MCF 10A (cell line): ENCODE measurements at regions of chr15 and their contacts with region 1.

Region 1: GRCh38 chr15:40847205-40847961 is 3.5 kb downstream of the SPINT1 start:
- DNase-seq: peak; percentile 69
- H3K4me3 Mint-ChIP-seq: peak overlapping the region; percentile 96
- H3K27ac Mint-ChIP-seq: peak overlapping the region; percentile 46
- H3K4me1 Mint-ChIP-seq: peaks cover 29% of the 10 kb centered on the region
- H3K27me3 Mint-ChIP-seq: no peaks in the 10 kb centered on the region
- CTCF ChIP-seq: no peak

Region 2: DNA sequence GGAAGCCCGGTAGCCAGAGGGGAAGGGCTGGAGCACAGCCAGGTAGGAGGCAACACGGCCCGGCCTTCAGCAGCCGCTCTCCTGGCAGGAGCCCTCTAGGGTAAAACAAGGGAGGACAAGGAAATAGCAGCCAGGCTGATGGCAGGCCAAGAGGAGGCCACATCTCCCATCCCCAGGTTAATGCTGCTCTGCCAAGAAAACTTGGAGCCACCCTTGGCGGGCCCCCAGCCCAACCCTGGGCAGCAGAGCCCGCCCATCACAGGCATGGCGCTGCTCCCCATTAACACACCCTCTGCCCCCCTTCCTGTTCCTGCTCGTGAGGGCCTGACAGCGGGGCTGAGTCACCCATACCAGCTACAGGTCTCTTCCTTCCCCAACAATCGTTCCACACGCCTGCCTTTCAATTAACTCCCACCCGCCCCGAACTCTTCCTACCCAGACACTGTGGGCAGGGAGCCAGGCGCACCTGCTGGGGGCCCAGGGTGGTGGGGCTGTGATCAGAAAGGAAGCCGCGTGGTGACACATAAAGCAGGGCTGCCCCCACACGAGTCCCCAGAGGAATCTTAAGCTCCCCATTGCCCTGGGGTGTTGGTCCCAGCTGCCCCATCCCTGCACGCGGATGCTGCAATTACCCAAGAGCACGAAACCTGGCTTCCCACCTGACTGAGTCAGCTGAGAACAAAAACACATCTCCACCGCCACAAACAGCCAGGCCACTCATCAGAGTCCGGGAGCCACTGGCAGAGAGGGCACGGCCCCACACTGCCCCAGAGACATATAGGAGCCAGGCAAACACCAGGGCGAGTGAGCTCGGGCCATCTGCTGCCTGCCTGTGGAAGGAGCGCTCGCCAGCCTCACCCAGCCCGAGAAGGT is 77.9 kb before region 1 on chr15 and contains the start of gene C15orf62:
- CTCF ChIA-PET with region 1: interaction called, 4 read pairs
- POLR2A ChIA-PET with region 1: interaction called, 30 read pairs
- intact Hi-C with region 1: no loop called
- DNase-seq: peak; percentile 96
- H3K4me3 Mint-ChIP-seq: peak within 1 kb of the TSS; percentile 64
- H3K27ac Mint-ChIP-seq: peak within 1 kb of the TSS; percentile 84
- H3K4me1 Mint-ChIP-seq: peaks cover 48% of the 10 kb centered on the region
- H3K27me3 Mint-ChIP-seq: no peaks in the 10 kb centered on the region
- CTCF ChIP-seq: no peak
- total RNA-seq, gene C15orf62: 0.26 and 0.52 TPM in 2 replicates

Region 3: GRCh38 chr15:40793216-40793989 is 54.0 kb before region 1 on chr15:
- CTCF ChIA-PET with region 1: interaction called, 3 read pairs
- POLR2A ChIA-PET with region 1: interaction called, 7 read pairs
- intact Hi-C with region 1: loop called (anchors 2 kb)
- DNase-seq: peak; percentile 99
- H3K4me3 Mint-ChIP-seq: no peak overlapping the region
- H3K27ac Mint-ChIP-seq: peak overlapping the region; percentile 70
- H3K4me1 Mint-ChIP-seq: peaks cover 33% of the 10 kb centered on the region
- H3K27me3 Mint-ChIP-seq: no peaks in the 10 kb centered on the region
- CTCF ChIP-seq: no peak

Region 4: DNA sequence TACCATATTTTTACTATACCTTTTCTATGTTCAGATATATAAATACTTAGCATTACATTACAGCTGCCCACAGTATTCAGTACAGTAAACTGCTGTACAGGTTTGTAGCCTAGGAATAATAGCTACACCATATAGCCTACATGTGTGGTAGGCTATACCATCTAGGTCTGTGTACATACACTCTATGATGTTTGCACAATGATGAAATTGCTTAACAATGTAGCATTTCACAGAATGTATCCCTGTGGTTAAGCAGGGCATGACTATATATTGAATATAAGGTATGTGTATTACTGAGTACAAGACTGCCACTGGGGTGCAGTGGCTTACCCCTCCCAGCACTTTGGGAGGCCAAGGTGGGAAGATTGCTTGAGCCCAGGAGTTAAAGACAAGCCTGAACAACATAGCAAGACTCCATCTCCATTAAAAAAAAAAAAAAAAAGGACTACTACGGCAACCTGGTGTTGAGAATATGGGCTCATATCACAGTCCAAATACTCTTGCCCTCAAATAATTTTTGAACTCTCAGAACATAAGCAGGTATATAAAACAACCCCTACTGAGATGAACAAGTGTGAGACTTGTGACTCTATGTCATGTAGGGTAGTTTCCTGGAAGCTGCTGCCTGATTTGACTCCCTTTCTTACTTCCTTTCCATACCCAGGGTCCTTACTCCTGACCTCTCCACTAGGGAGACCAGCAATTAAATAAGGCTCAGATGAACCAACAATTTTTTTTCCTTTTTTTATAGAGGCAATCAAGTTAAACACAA is 23.6 kb before region 1 on chr15:
- CTCF ChIA-PET with region 1: interaction called, 4 read pairs
- POLR2A ChIA-PET with region 1: interaction called, 12 read pairs
- intact Hi-C with region 1: no loop called
- DNase-seq: peak; percentile 58
- H3K4me3 Mint-ChIP-seq: no peak overlapping the region
- H3K27ac Mint-ChIP-seq: no peak overlapping the region
- H3K4me1 Mint-ChIP-seq: peaks cover 3% of the 10 kb centered on the region
- H3K27me3 Mint-ChIP-seq: no peaks in the 10 kb centered on the region
- CTCF ChIP-seq: no peak

Region 5: GRCh38 chr15:40873625-40874561 is 26.5 kb after region 1 on chr15 and contains the start of gene RHOV:
- CTCF ChIA-PET with region 1: interaction called, 5 read pairs
- POLR2A ChIA-PET with region 1: interaction called, 13 read pairs
- intact Hi-C with region 1: no loop called
- DNase-seq: peak; percentile 91
- H3K4me3 Mint-ChIP-seq: peak within 1 kb of the TSS; percentile 77
- H3K27ac Mint-ChIP-seq: peak within 1 kb of the TSS; percentile 52
- H3K4me1 Mint-ChIP-seq: peaks cover 40% of the 10 kb centered on the region
- H3K27me3 Mint-ChIP-seq: no peaks in the 10 kb centered on the region
- CTCF ChIP-seq: peak; percentile 56
- total RNA-seq, gene RHOV: 1.2 and 1.7 TPM in 2 replicates